Activated CD4-positive, alpha-beta memory T cell treated with anti-CD3 and anti-CD28 coated beads, Interleukin-2, amount 10 ng/mL, durations not matched to agents 7 days and 5 days (primary cell): ENCODE measurements at regions of chr3 and their contacts with region 1.

Region 1: GRCh38 chr3:129399145-129399894 is 29.1 kb downstream of the EFCAB12 start:
- DNase-seq: peak; percentile 77
- H3K4me3 Mint-ChIP-seq: peak overlapping the region; percentile 98
- H3K27ac Mint-ChIP-seq: peak overlapping the region; percentile 94
- H3K4me1 Mint-ChIP-seq: peaks cover 41% of the 10 kb centered on the region
- H3K27me3 Mint-ChIP-seq: no peaks in the 10 kb centered on the region

Region 2: GRCh38 chr3:129409541-129409940 is 10.2 kb after region 1 on chr3:
- CTCF ChIA-PET with region 1: interaction called, 22 read pairs
- POLR2A ChIA-PET with region 1: interaction called, 5 read pairs
- DNase-seq: no peak
- H3K4me3 Mint-ChIP-seq: no peak overlapping the region
- H3K27ac Mint-ChIP-seq: no peak overlapping the region
- H3K4me1 Mint-ChIP-seq: no peaks in the 10 kb centered on the region
- H3K27me3 Mint-ChIP-seq: peaks cover 4% of the 10 kb centered on the region

Region 3: GRCh38 chr3:129439817-129440617 is 40.7 kb after region 1 on chr3 and contains the starts of genes IFT122 and MBD4:
- CTCF ChIA-PET with region 1: interaction called, 17 read pairs
- POLR2A ChIA-PET with region 1: interaction called, 7 read pairs
- DNase-seq: peak; percentile 100
- H3K4me3 Mint-ChIP-seq: peak within 1 kb of the TSS; percentile 87
- H3K27ac Mint-ChIP-seq: peak within 1 kb of the TSS; percentile 94
- H3K4me1 Mint-ChIP-seq: peaks cover 66% of the 10 kb centered on the region
- H3K27me3 Mint-ChIP-seq: no peaks in the 10 kb centered on the region
- total RNA-seq, gene IFT122: 22.6 to 22.8 TPM
- total RNA-seq, gene MBD4: 47.1 to 47.4 TPM

Region 4: GRCh38 chr3:129576514-129577352 is 177.4 kb after region 1 on chr3:
- CTCF ChIA-PET with region 1: no interaction called
- POLR2A ChIA-PET with region 1: no interaction called
- DNase-seq: peak; percentile 83
- H3K4me3 Mint-ChIP-seq: no peak overlapping the region
- H3K27ac Mint-ChIP-seq: peak overlapping the region; percentile 94
- H3K4me1 Mint-ChIP-seq: peaks cover 40% of the 10 kb centered on the region
- H3K27me3 Mint-ChIP-seq: no peaks in the 10 kb centered on the region